Caco-2 (cell line): ENCODE measurements at regions of chr15 and their contacts with region 1.

Region 1: GRCh38 chr15:68875377-68876116 is 54.8 kb upstream of the SPESP1 start:
- DNase-seq: peak; percentile 88 to 90
- H3K4me3 ChIP-seq: peak overlapping the region; percentile 41
- H3K4me3 Mint-ChIP-seq: peak overlapping the region; percentile 76
- H3K27ac Mint-ChIP-seq: no peak overlapping the region
- H3K4me1 ChIP-seq: no peaks in the 10 kb centered on the region
- H3K4me1 Mint-ChIP-seq: no peaks in the 10 kb centered on the region
- H3K27me3 ChIP-seq: no peaks in the 10 kb centered on the region
- H3K27me3 Mint-ChIP-seq: peaks cover 5% of the 10 kb centered on the region
- CTCF ChIP-seq: peak; percentile 86

Region 2: DNA sequence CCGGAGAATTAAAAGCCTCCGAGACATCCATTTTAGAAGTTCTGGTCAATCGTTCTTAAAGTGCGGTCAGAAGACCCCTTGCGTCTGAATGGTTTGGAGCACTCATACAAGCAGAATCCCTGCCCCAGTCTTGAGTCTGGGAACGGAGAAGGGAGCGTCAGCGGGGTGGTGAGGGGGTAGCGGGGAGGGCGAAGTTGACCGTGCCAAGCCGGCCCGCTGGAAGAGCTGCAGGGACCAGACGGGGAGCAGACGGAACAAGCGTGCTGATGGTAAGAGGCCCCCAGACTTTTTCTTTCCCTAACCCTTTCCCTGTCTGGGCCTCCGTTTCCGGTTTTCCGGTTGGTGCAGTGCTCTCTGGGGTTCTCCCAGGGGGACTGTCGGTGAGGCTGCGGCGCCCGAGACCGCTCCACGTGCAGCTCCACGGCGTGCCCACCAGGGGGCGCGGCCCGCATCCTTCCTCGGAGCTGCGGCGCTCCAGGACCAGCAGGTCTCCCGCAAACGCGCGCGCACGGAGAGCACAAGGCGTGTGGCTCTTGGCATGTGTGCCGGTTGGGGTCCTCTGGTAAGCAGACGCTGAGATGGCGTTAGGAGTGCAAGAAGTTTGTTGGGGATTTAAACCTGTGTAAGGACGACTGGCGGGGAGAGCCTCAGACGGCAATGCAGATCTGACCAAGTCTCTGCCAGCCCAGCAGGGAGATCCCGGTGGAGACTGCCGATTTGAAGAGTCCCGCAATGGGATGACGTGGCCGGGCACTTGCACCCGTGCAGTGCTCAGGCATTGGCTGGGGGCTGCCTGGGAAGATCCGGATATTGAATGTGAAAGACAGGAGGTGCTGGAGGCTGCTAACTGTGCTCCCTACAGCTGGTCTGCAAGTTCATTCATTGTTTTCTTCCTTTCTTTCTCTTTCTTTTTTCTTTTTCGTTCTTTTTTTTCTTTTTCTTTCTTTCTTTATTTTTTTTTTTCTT is 315.9 kb before region 1 on chr15:
- CTCF ChIA-PET with region 1: interaction called, 20 read pairs
- POLR2A ChIA-PET with region 1: no interaction called
- intact Hi-C with region 1: no loop called
- DNase-seq: peak; percentile 66 to 84
- H3K4me3 ChIP-seq: no peak overlapping the region
- H3K4me3 Mint-ChIP-seq: peak overlapping the region; percentile 61
- H3K27ac Mint-ChIP-seq: no peak overlapping the region
- H3K4me1 ChIP-seq: no peaks in the 10 kb centered on the region
- H3K4me1 Mint-ChIP-seq: no peaks in the 10 kb centered on the region
- H3K27me3 ChIP-seq: no peaks in the 10 kb centered on the region
- H3K27me3 Mint-ChIP-seq: peaks cover 13% of the 10 kb centered on the region
- CTCF ChIP-seq: peak; percentile 88 to 90

Region 3: GRCh38 chr15:68730471-68730919 is 145.1 kb before region 1 on chr15:
- CTCF ChIA-PET with region 1: interaction called, 18 read pairs
- POLR2A ChIA-PET with region 1: no interaction called
- intact Hi-C with region 1: loop called (anchors 1 kb)
- DNase-seq: peak; percentile 40 to 44
- H3K4me3 ChIP-seq: no peak overlapping the region
- H3K4me3 Mint-ChIP-seq: no peak overlapping the region
- H3K27ac Mint-ChIP-seq: no peak overlapping the region
- H3K4me1 ChIP-seq: peaks cover 16% of the 10 kb centered on the region; the same call in 1 of the 2 replicates
- H3K4me1 Mint-ChIP-seq: peaks cover 15% of the 10 kb centered on the region
- H3K27me3 ChIP-seq: no peaks in the 10 kb centered on the region
- H3K27me3 Mint-ChIP-seq: peaks cover 4% of the 10 kb centered on the region
- CTCF ChIP-seq: peak; percentile 48 to 56

Region 4: GRCh38 chr15:68817304-68818065 is 58.1 kb before region 1 on chr15:
- CTCF ChIA-PET with region 1: interaction called, 9 read pairs
- POLR2A ChIA-PET with region 1: interaction called, 3 read pairs
- intact Hi-C with region 1: loop called (anchors 5 kb)
- DNase-seq: peak in 1 of 2 experiments; percentile 67
- H3K4me3 ChIP-seq: peak overlapping the region; percentile 95
- H3K4me3 Mint-ChIP-seq: peak overlapping the region; percentile 100
- H3K27ac Mint-ChIP-seq: peak overlapping the region; percentile 96
- H3K4me1 ChIP-seq: peaks cover 28% of the 10 kb centered on the region
- H3K4me1 Mint-ChIP-seq: peaks cover 18% of the 10 kb centered on the region
- H3K27me3 ChIP-seq: no peaks in the 10 kb centered on the region
- H3K27me3 Mint-ChIP-seq: no peaks in the 10 kb centered on the region
- CTCF ChIP-seq: no peak

Region 5: DNA sequence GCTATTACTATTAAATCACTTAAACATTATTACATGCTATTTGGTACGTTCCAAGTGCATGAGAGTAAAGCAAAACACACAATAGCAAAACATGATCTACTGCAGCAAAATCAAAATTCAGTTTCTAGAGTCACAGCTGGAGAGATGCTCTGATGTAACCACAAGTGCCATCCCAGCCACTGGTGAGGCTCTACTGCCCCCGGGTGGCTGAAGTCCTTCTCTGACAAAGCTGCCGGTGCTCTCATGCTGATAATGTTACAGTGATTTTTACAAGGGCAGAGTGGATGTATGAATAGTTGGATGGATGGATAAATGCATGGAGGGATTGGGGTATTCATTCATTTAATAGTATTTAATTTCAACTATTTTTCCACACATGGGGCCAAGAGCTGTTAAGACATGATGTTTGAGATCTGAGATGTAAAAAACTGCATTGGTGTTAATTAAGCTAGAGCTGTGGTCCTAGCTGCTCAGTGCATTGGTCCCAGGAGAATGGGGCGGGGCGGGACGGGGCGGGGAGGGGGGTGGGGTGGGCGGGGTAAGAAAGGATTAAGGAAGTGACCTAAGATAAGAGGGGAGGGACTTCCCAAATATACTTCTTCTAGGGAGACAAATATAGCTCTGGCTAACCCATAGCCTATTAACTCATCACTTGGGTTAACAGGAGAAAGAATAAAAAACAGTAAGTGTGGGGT is 49.5 kb after region 1 on chr15:
- CTCF ChIA-PET with region 1: interaction called, 31 read pairs
- POLR2A ChIA-PET with region 1: no interaction called
- intact Hi-C with region 1: loop called (anchors 2 kb)
- DNase-seq: peak; percentile 73 to 85
- H3K4me3 ChIP-seq: no peak overlapping the region
- H3K4me3 Mint-ChIP-seq: no peak overlapping the region
- H3K27ac Mint-ChIP-seq: no peak overlapping the region
- H3K4me1 ChIP-seq: no peaks in the 10 kb centered on the region
- H3K4me1 Mint-ChIP-seq: no peaks in the 10 kb centered on the region
- H3K27me3 ChIP-seq: no peaks in the 10 kb centered on the region
- H3K27me3 Mint-ChIP-seq: peaks cover 14% of the 10 kb centered on the region
- CTCF ChIP-seq: peak; percentile 83 to 90

Region 6: GRCh38 chr15:69117431-69117871 is 241.9 kb after region 1 on chr15:
- CTCF ChIA-PET with region 1: no interaction called
- POLR2A ChIA-PET with region 1: no interaction called
- intact Hi-C with region 1: no loop called
- DNase-seq: peak in 1 of 2 experiments; percentile 46
- H3K4me3 ChIP-seq: no peak overlapping the region
- H3K4me3 Mint-ChIP-seq: no peak overlapping the region
- H3K27ac Mint-ChIP-seq: no peak overlapping the region
- H3K4me1 ChIP-seq: no peaks in the 10 kb centered on the region
- H3K4me1 Mint-ChIP-seq: peaks cover 7% of the 10 kb centered on the region
- H3K27me3 ChIP-seq: no peaks in the 10 kb centered on the region; the same call in 1 of the 2 replicates
- H3K27me3 Mint-ChIP-seq: peaks cover 21% of the 10 kb centered on the region
- CTCF ChIP-seq: no peak